ENCODE measurements at regions of chr11 and their contacts with region 1.

Region 1: DNA sequence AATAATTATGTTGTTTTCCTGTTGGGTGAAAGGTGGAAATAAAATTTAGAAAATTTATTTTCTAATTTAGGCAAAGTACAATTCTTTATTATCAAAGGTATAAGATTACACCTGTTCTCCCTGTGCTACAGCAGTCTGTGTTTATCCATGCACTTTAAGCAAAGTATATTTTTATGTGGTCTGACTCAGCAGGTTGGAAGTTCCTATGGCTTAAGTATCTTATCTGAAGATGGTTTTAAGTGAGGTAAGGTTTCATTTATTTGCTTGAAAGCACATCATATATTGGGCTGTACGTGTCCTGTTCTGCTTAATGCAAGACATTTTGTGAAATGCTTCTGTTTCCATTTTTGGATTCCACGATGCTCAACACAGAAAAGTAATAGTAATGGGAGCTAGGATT is 14.6 kb downstream of the PPME1 start:
- DNase-seq: no peak
- ATAC-seq: no peak
- H3K4me3 ChIP-seq: no peak overlapping the region
- H3K27ac ChIP-seq: no peak overlapping the region
- H3K4me1 ChIP-seq: no peaks in the 10 kb centered on the region
- H3K27me3 ChIP-seq: no peaks in the 10 kb centered on the region
- CTCF ChIP-seq: no peak
- EP300 ChIP-seq: no peak
- POLR2A ChIP-seq: no peak
- RAD21 ChIP-seq: no peak

Region 2: DNA sequence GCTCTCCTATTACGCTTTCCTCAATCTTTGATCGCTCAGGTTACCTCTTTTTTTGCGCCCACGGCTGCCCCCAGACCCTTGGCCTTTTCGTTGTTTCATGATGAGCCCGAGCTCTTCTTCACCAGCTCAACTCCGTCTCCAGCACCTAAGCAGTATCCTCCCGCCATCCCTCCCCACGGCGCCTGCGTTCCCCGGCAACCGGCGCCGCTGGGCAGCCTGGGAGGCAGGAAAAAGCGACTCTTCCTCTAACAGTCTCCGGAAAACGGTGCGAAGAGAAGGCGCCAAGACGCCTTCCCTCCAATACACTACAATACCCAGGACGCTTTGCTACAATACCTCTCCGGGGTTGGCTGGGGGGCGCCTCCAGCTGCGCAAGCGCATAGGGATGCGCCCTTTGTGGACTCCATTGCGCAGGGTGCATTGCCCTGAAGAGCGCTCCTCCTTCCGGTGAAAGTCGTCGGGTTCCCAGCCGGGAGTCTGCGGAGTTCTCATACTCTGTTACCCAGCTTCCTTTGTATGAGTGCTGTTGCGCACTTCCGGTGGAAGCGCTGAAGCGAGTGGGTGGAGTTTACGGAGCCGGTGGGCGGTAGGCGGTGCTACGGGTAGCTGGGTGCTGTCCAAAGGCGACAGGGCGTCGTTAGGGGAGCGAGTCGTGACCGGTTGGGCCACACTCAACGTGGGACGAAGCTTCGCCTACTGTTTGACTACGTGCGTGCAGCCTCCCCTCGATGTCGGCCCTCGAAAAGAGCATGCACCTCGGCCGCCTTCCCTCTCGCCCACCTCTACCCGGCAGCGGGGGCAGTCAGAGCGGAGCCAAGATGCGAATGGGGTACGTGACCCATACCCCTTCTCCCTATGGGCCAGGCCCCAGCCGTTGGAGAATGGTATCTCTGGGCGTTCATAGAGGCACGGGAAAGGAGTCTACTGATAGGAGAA is 14.7 kb before region 1 on chr11 and contains the starts of genes C2CD3 and PPME1:
- CTCF ChIA-PET with region 1: interaction called, 15 read pairs
- POLR2A ChIA-PET with region 1: interaction called, 11 read pairs
- RAD21 ChIA-PET with region 1: interaction called, 3 read pairs
- SMC1A ChIA-PET with region 1: interaction called, 9 read pairs
- in situ Hi-C with region 1: no loop called
- intact Hi-C with region 1: no loop called
- DNase-seq: peak; percentile 100
- ATAC-seq: peak; percentile 96
- H3K4me3 ChIP-seq: peak within 1 kb of the TSS; percentile 95
- H3K27ac ChIP-seq: peak within 1 kb of the TSS; percentile 69
- H3K4me1 ChIP-seq: peaks cover 3% of the 10 kb centered on the region; the same call in 1 of the 2 replicates
- H3K27me3 ChIP-seq: no peaks in the 10 kb centered on the region
- CTCF ChIP-seq: peak; percentile 11 to 36 (median 11); a peak in 2 of 6 replicates
- EP300 ChIP-seq: 0 out of 4 replicates have a peak, but pooled peaks of 1 of the 2 experiments have one; percentile 16
- POLR2A ChIP-seq: peak; percentile 99
- RAD21 ChIP-seq: 0 out of 2 replicates have a peak, but pooled peaks have one; percentile 1
- polyA plus RNA-seq, gene C2CD3: 2.3 to 2.7 TPM
- polyA plus RNA-seq, gene PPME1: 3.1 to 3.3 TPM

Region 3: GRCh38 chr11:74195828-74196227 is 10.1 kb after region 1 on chr11:
- CTCF ChIA-PET with region 1: interaction called, 8 read pairs
- POLR2A ChIA-PET with region 1: interaction called, 3 read pairs
- RAD21 ChIA-PET with region 1: no interaction called
- SMC1A ChIA-PET with region 1: interaction called, 18 read pairs
- in situ Hi-C with region 1: no loop called
- intact Hi-C with region 1: no loop called
- DNase-seq: no peak
- ATAC-seq: no peak
- H3K4me3 ChIP-seq: no peak overlapping the region
- H3K27ac ChIP-seq: no peak overlapping the region
- H3K4me1 ChIP-seq: no peaks in the 10 kb centered on the region
- H3K27me3 ChIP-seq: no peaks in the 10 kb centered on the region
- CTCF ChIP-seq: no peak
- EP300 ChIP-seq: no peak
- POLR2A ChIP-seq: no peak
- RAD21 ChIP-seq: no peak